HEK293 (cell line): ENCODE measurements at regions of chr13 and their contacts with region 1.

Region 1: GRCh38 chr13:81017513-81018152 is 676.7 kb upstream of the SPRY2 start:
- H3K4me3 ChIP-seq: no peak overlapping the region
- H3K27ac ChIP-seq: no peak overlapping the region
- H3K4me1 ChIP-seq: no peaks in the 10 kb centered on the region
- CTCF ChIP-seq: no peak

Region 2: GRCh38 chr13:80802946-80803345 is 214.7 kb before region 1 on chr13:
- CTCF ChIA-PET with region 1: no interaction called
- POLR2A ChIA-PET with region 1: no interaction called
- H3K4me3 ChIP-seq: no peak overlapping the region
- H3K27ac ChIP-seq: no peak overlapping the region
- H3K4me1 ChIP-seq: no peaks in the 10 kb centered on the region
- CTCF ChIP-seq: no peak

Region 3: DNA sequence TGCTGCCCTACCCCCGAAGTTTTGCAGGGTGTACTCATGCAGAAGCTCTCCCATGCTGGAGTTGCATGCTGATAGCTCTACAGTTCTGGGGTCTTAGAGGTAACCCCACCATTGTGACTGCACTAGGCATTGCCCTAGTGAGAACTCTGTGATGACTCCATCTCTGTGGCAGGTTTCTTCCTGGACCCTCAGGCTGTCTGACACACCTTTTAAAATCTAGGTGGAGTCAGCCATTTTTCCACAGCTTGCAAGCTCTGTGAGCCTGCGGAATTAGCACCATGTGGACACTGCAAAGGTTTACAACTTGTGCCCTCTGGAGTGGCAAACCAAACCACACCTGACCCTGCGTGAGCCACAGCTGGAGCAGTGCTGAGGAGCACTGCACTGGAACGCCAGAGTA is 40.5 kb before region 1 on chr13:
- CTCF ChIA-PET with region 1: interaction called, 10 read pairs
- POLR2A ChIA-PET with region 1: no interaction called
- H3K4me3 ChIP-seq: no peak overlapping the region
- H3K27ac ChIP-seq: no peak overlapping the region
- H3K4me1 ChIP-seq: no peaks in the 10 kb centered on the region
- CTCF ChIP-seq: no peak

Region 4: GRCh38 chr13:81314461-81314860 is 296.8 kb after region 1 on chr13:
- CTCF ChIA-PET with region 1: no interaction called
- POLR2A ChIA-PET with region 1: no interaction called
- H3K4me3 ChIP-seq: no peak overlapping the region
- H3K27ac ChIP-seq: no peak overlapping the region
- H3K4me1 ChIP-seq: no peaks in the 10 kb centered on the region
- CTCF ChIP-seq: no peak